ENCODE measurements at regions of chr12 and their contacts with region 1.

Region 1: GRCh38 chr12:130838951-130839769 is at the start of gene STX2:
- DNase-seq: peak; percentile 57 to 74
- ATAC-seq: peak; percentile 91 to 96
- H3K4me3 ChIP-seq: peak within 1 kb of the TSS; percentile 67 to 87 (median 73)
- H3K27ac ChIP-seq: peak within 1 kb of the TSS; percentile 40 to 67 (median 60)
- H3K4me1 ChIP-seq: peaks cover 0 to 6% of the 10 kb centered on the region in 2 donors
- H3K27me3 ChIP-seq: no peaks in the 10 kb centered on the region
- CTCF ChIP-seq: no peak
- POLR2A ChIP-seq: peak in 1 of 2 donors; percentile 25
- total RNA-seq, gene STX2: 4.8 to 12.0 (median 9.1) TPM

Region 2: GRCh38 chr12:130871286-130872178 is 32.4 kb after region 1 on chr12 and contains the start of gene RAN:
- in situ Hi-C with region 1: loop called in 1 of 4 experiments (anchors 5 kb)
- intact Hi-C with region 1: loop called (anchors 1 kb)
- DNase-seq: peak; percentile 88
- ATAC-seq: peak; percentile 90
- H3K4me3 ChIP-seq: peak within 1 kb of the TSS; percentile 55 to 90 (median 68)
- H3K27ac ChIP-seq: peak within 1 kb of the TSS; percentile 71 to 91 (median 83)
- H3K4me1 ChIP-seq: peaks cover 11 to 15% of the 10 kb centered on the region in 2 donors
- H3K27me3 ChIP-seq: no peaks in the 10 kb centered on the region
- CTCF ChIP-seq: no peak
- POLR2A ChIP-seq: peak; percentile 63 to 77
- total RNA-seq, gene RAN: 125 to 299 (median 197) TPM

Region 3: GRCh38 chr12:130916251-130916911 is 77.2 kb after region 1 on chr12:
- in situ Hi-C with region 1: no loop called
- intact Hi-C with region 1: no loop called
- DNase-seq: peak; percentile 25 to 34
- ATAC-seq: peak; percentile 63 to 74
- H3K4me3 ChIP-seq: peak overlapping the region in 1 of 4 donors; percentile 7
- H3K27ac ChIP-seq: no peak overlapping the region
- H3K4me1 ChIP-seq: peaks cover 0 to 3% of the 10 kb centered on the region in 2 donors
- H3K27me3 ChIP-seq: peaks cover 7 to 20% (median 11%) of the 10 kb centered on the region in 3 donors
- CTCF ChIP-seq: peak; percentile 73 to 91 (median 86)
- POLR2A ChIP-seq: no peak

Region 4: DNA sequence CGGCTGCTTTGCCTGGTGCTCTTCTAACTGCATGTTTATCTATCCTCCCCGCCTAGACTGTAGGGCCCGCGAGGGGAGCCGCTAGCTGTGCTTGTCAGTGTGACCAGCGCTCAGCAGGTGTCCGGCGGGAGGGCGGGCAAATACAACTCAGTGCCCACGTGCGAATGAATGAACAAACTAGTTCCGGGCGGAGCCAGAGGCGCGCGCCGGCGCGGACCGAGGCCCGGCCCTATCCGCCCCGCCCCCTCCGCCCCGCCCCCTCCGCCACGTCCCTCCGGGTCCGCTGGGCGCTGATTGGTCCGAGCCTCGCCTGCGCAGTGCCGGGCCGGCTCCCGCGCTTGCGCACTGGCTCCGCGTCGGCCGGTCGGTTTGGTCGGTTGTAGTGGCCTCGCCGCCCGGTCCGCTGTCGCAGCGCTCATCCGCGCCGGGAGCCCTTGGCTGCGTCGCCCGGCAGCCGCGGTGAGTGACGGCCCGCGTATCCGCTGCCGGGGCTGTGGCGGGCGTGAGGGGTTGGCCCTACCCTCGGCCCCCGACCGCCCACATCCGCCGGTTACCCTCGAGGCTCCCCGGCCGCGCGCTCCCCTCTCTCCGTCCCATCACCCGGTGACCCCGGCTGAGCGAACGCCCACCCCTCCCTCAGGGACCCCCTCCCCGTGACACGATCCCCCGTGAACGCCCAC is 1244.9 kb after region 1 on chr12:
- in situ Hi-C with region 1: no loop called
- intact Hi-C with region 1: loop called (anchors 10 kb)
- DNase-seq: peak; percentile 90
- ATAC-seq: peak; percentile 87 to 92
- H3K4me3 ChIP-seq: peak overlapping the region; percentile 72 to 98 (median 87)
- H3K27ac ChIP-seq: peak overlapping the region; percentile 93 to 97 (median 94)
- H3K4me1 ChIP-seq: peaks cover 17 to 22% of the 10 kb centered on the region in 2 donors
- H3K27me3 ChIP-seq: no peaks in the 10 kb centered on the region
- CTCF ChIP-seq: peak in 1 of 5 experiments; percentile 5
- POLR2A ChIP-seq: peak; percentile 94 to 96

Measured in gastrocnemius medialis (tissue), 4 donors.